ENCODE measurements at regions of chr1 and their contacts with region 1.

Region 1: GRCh38 chr1:8374812-8375211 is 56.9 kb downstream of the SLC45A1 start:
- DNase-seq: peak in 1 of 6 donors; percentile 38
- ATAC-seq: peak in 3 of 4 donors; percentile 21 to 30 (median 29)
- H3K4me3 ChIP-seq: no peak overlapping the region
- H3K27ac ChIP-seq: peak overlapping the region in 3 of 4 donors; percentile 56 to 82 (median 72)
- H3K4me1 ChIP-seq: peaks cover 33 to 46% (median 39%) of the 10 kb centered on the region in 3 donors
- H3K27me3 ChIP-seq: no peaks in the 10 kb centered on the region
- CTCF ChIP-seq: peak in 2 of 4 donors; percentile 21 to 31

Region 2: GRCh38 chr1:8423650-8424538 is 49.1 kb after region 1 on chr1:
- intact Hi-C with region 1: loop called in 1 of 3 experiments (anchors 5 kb)
- DNase-seq: peak; percentile 45 to 77 (median 56)
- ATAC-seq: peak; percentile 51 to 78 (median 56)
- H3K4me3 ChIP-seq: peak overlapping the region; percentile 61 to 85 (median 73)
- H3K27ac ChIP-seq: peak overlapping the region; percentile 82 to 95 (median 87)
- H3K4me1 ChIP-seq: peaks cover 29 to 48% (median 36%) of the 10 kb centered on the region in 3 donors
- H3K27me3 ChIP-seq: no peaks in the 10 kb centered on the region
- CTCF ChIP-seq: no peak

Measured in pancreas (tissue), 10 donors.